ENCODE measurements at regions of chr1 and their contacts with region 1.

Region 1: GRCh38 chr1:243255791-243256512 is at the start of gene SDCCAG8:
- DNase-seq: peak; percentile 97
- H3K4me3 Mint-ChIP-seq: peak within 1 kb of the TSS; percentile 99
- H3K27ac Mint-ChIP-seq: peak within 1 kb of the TSS; percentile 100
- H3K4me1 Mint-ChIP-seq: peaks cover 36% of the 10 kb centered on the region
- H3K27me3 Mint-ChIP-seq: no peaks in the 10 kb centered on the region
- total RNA-seq, gene SDCCAG8: 24.5 to 29.9 TPM

Region 2: GRCh38 chr1:241640029-241640818 is 1615.7 kb before region 1 on chr1 and contains the starts of genes CHML and OPN3:
- CTCF ChIA-PET with region 1: no interaction called
- intact Hi-C with region 1: loop called (anchors 1 kb)
- DNase-seq: peak; percentile 93
- H3K4me3 Mint-ChIP-seq: peak within 1 kb of the TSS; percentile 74
- H3K27ac Mint-ChIP-seq: peak within 1 kb of the TSS; percentile 81
- H3K4me1 Mint-ChIP-seq: peaks cover 39% of the 10 kb centered on the region
- H3K27me3 Mint-ChIP-seq: no peaks in the 10 kb centered on the region
- total RNA-seq, gene CHML: 19.9 to 21.1 TPM
- total RNA-seq, gene OPN3: 7.7 to 9.0 TPM

Region 3: DNA sequence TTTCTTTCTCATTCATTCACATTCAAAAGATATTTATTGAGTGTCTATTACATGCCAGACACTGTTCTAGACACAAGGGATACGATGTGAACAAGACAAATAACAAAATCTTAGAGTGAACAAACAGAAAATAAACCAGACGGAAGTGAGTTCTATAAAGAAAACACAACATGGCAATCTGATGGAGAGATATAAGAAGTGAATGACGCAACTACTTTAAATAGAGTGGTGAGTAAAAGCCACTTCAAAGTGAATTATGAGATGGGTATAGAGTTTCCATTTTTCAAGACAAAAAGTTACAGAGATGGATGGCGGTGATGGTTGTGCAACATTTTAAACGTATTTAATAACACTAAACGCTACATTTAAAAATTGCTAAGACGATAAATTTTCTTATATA is 76.2 kb before region 1 on chr1:
- CTCF ChIA-PET with region 1: no interaction called
- intact Hi-C with region 1: loop called (anchors 1 kb)
- DNase-seq: no peak
- H3K4me3 Mint-ChIP-seq: peak overlapping the region; percentile 32
- H3K27ac Mint-ChIP-seq: no peak overlapping the region
- H3K4me1 Mint-ChIP-seq: peaks cover 20% of the 10 kb centered on the region
- H3K27me3 Mint-ChIP-seq: no peaks in the 10 kb centered on the region

Region 4: GRCh38 chr1:243421784-243422183 is 165.8 kb after region 1 on chr1:
- CTCF ChIA-PET with region 1: no interaction called
- intact Hi-C with region 1: loop called (anchors 2 kb)
- DNase-seq: peak; percentile 77
- H3K4me3 Mint-ChIP-seq: peak overlapping the region; percentile 50
- H3K27ac Mint-ChIP-seq: no peak overlapping the region
- H3K4me1 Mint-ChIP-seq: peaks cover 25% of the 10 kb centered on the region
- H3K27me3 Mint-ChIP-seq: no peaks in the 10 kb centered on the region

Region 5: GRCh38 chr1:244652699-244653466 is 1396.9 kb after region 1 on chr1 and contains the start of gene DESI2:
- CTCF ChIA-PET with region 1: no interaction called
- intact Hi-C with region 1: loop called (anchors 1 kb)
- DNase-seq: peak; percentile 99
- H3K4me3 Mint-ChIP-seq: peak within 1 kb of the TSS; percentile 82
- H3K27ac Mint-ChIP-seq: peak within 1 kb of the TSS; percentile 88
- H3K4me1 Mint-ChIP-seq: peaks cover 18% of the 10 kb centered on the region
- H3K27me3 Mint-ChIP-seq: no peaks in the 10 kb centered on the region
- total RNA-seq, gene DESI2: 31.7 to 32.5 TPM

Region 6: GRCh38 chr1:244970661-244971551 is 1715.0 kb after region 1 on chr1:
- CTCF ChIA-PET with region 1: no interaction called
- intact Hi-C with region 1: loop called (anchors 10 kb)
- DNase-seq: peak; percentile 93
- H3K4me3 Mint-ChIP-seq: peak overlapping the region; percentile 93
- H3K27ac Mint-ChIP-seq: peak overlapping the region; percentile 98
- H3K4me1 Mint-ChIP-seq: peaks cover 11% of the 10 kb centered on the region
- H3K27me3 Mint-ChIP-seq: no peaks in the 10 kb centered on the region

Measured in activated naive CD4-positive, alpha-beta T cell treated with anti-CD3 and anti-CD28 coated beads for 36 hours (primary cell).